ENCODE measurements at regions of chr17 and their contacts with region 1.

Region 1: DNA sequence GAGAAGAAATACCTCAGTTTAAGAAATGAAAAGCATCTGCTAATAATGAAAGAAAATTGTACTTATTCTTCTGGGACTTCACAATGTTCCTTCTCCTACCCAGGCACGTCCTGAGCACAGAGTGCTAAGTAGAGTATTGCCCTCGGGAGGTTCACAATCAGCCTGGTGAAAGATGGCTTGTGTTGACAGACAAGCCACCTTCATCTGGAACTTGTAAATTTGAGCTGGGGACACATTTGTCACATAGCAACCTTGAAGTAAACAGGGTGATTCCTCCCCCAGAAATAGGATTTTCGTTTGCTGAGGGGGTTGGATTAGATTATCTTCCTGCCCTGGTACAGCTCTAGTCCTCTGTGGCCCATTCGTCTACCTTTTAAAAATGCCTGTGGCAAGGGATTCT is 34.4 kb upstream of the MYH2 start:
- DNase-seq: no peak
- H3K4me3 ChIP-seq: no peak overlapping the region
- H3K27ac ChIP-seq: no peak overlapping the region
- H3K4me1 ChIP-seq: no peaks in the 10 kb centered on the region
- H3K27me3 ChIP-seq: no peaks in the 10 kb centered on the region
- CTCF ChIP-seq: no peak
- EP300 ChIP-seq: no peak
- POLR2A ChIP-seq: no peak

Region 2: GRCh38 chr17:10857976-10858375 is 274.1 kb after region 1 on chr17:
- in situ Hi-C with region 1: no loop called
- intact Hi-C with region 1: no loop called
- DNase-seq: no peak
- H3K4me3 ChIP-seq: no peak overlapping the region
- H3K27ac ChIP-seq: no peak overlapping the region
- H3K4me1 ChIP-seq: no peaks in the 10 kb centered on the region
- H3K27me3 ChIP-seq: no peaks in the 10 kb centered on the region
- CTCF ChIP-seq: no peak
- EP300 ChIP-seq: no peak
- POLR2A ChIP-seq: no peak

Region 3: DNA sequence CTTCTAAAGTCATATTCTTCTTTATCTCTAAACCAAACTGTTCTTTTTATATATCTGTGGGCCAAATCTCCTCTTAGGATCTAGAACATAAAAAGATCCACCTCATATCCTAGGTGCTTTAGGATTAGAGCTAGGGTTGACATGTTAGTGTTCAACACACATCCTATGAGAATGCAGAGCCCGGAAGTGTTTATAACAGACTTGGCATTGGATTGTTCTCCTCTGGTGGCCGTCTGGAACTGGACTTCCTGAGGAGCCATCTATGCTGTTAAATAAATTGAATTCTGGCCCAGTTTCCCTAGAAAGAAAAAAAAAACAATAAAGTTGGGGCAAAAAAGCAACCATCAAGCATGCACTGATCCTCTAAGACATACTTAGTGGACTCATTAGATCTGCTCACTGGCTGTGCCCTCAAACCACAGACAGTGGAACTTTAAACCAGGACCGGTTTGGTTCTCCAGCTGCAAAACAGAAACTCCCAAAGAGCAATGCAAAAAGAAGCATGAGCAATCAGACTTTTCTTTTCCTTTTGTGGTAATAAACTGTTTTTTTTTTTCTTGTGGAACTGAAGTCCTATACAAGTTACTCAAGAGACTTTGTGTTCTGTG is 1230.9 kb after region 1 on chr17:
- in situ Hi-C with region 1: no loop called
- intact Hi-C with region 1: loop called (anchors 5 kb)
- DNase-seq: no peak
- H3K4me3 ChIP-seq: no peak overlapping the region
- H3K27ac ChIP-seq: no peak overlapping the region
- H3K4me1 ChIP-seq: peaks cover 0 to 5% (median 0%) of the 10 kb centered on the region in 4 donors
- H3K27me3 ChIP-seq: no peaks in the 10 kb centered on the region
- CTCF ChIP-seq: no peak
- EP300 ChIP-seq: no peak
- POLR2A ChIP-seq: no peak